CD8-positive, alpha-beta T cell (primary cell): ENCODE measurements at regions of chr15 and their contacts with region 1.

Region 1: DNA sequence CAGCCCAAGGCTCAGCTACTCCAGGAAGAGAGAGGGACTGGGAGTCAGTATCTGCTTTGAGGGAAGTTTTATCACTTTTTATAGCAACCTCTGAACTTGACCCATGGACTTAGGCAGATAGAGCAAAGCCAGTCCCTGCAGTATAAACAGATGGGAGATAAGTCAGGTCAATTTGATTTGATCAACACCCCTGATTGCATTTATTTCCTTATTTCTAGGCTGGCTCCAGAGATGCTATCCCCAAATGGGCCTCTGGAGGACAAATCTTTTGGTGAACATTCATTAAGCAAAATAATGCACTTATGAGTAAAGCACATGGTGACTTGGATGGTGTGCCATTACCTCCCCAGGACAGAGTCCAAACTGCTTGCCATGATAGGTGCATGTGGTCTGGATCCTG is 8.9 kb upstream of the IDH3A start:
- DNase-seq: no peak
- ATAC-seq: no peak
- H3K4me3 ChIP-seq: no peak overlapping the region
- H3K4me3 Mint-ChIP-seq: no peak overlapping the region
- H3K27ac ChIP-seq: no peak overlapping the region
- H3K27ac Mint-ChIP-seq: no peak overlapping the region
- H3K4me1 ChIP-seq: no peaks in the 10 kb centered on the region
- H3K4me1 Mint-ChIP-seq: no peaks in the 10 kb centered on the region
- H3K27me3 ChIP-seq: no peaks in the 10 kb centered on the region
- H3K27me3 Mint-ChIP-seq: no peaks in the 10 kb centered on the region
- CTCF ChIP-seq: no peak

Region 2: DNA sequence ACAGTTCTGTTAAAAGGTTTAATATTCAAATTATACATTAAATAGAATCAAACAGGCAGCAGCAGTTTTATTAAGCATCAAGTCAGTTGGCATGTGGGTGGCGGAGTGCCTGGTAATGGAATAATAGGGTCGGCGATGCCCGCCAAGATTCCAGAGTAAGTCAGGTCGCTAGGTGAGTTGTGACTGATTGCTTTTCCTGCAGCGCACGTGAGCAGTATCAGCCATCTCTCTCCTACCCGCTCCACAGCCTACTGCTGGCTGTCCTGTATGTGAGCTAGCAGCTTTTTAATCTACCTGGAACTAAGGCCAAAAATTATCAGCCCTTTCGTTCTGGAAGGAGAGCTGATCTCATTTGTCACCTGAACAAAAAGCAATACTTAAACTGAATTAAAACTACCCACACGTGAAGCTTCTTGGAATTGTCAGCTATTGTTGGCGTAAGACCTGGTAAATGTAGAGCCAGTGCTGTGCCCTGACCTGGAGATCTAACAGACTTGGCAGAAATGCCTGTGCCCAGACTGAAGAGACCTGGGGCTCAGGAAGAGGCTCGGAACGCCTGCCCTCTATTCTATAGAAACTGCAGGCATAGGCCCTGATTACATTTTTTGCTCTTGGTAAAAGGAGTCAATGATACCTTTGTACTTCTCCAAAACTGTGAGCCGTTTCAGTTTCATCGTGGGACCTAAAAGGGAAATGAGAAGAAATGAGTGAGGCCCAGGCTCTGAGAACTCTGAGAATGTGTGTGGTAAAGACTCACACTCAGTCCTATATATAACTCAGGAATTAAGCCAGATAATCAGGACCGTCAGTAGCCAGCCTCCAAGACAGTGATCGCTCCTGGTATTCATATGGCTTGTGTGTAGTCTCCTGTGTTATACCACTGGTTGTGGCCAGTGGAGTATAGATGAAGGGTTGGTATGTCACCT is 30.8 kb after region 1 on chr15:
- CTCF ChIA-PET with region 1: no interaction called
- POLR2A ChIA-PET with region 1: no interaction called
- intact Hi-C with region 1: loop called in 1 of 2 experiments (anchors 5 kb)
- DNase-seq: no peak
- ATAC-seq: no peak
- H3K4me3 ChIP-seq: no peak overlapping the region
- H3K4me3 Mint-ChIP-seq: no peak overlapping the region
- H3K27ac ChIP-seq: no peak overlapping the region
- H3K27ac Mint-ChIP-seq: no peak overlapping the region
- H3K4me1 ChIP-seq: peaks cover 26% of the 10 kb centered on the region
- H3K4me1 Mint-ChIP-seq: peaks cover 36% of the 10 kb centered on the region
- H3K27me3 ChIP-seq: no peaks in the 10 kb centered on the region
- H3K27me3 Mint-ChIP-seq: no peaks in the 10 kb centered on the region
- CTCF ChIP-seq: no peak